WTC11 (cell line): ENCODE measurements at regions of chr10 and their contacts with region 1.

Region 1: DNA sequence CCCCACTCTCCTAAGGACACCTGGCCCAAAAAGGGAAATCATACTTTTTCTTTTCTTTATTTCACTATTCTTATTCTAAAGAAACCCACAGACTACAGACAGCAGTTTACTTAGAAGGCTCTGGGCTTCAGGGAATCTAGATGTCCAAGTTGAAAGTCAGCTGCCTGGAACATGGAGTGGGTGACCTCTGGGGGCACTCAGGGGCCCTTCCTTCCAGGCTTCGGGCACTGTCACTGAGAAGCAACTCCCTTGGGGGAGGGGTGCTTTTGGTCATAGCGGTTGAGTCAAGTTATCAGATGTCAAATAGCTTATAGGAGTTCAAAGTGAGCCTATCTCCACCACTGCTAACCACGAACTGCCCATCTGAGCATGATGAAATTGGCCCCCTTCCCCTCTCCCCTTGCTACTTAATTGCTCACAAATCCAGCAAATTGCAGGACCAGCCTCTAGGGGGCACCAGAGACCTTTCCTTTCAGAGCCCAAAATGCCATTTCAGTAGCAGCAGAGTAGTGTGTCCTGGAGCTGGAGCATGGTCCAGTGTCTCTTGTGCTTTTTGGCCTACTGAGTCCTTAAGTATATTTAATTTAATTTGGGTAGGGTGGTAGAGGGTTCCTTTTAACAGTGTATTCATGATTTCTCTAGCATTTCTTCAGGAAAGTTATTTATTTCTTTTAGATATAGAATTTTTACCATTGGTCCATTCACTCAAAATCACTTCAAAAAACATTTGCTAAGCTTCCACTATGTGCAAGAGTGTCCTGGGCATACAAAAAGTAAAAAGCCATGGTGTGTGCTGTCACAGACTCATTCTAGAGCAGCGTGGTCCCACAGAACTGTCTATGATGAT is 463.8 kb downstream of the KCNMA1 start:
- DNase-seq: peak; percentile 86
- ATAC-seq: peak; percentile 95
- H3K4me3 Mint-ChIP-seq: no peak overlapping the region
- H3K27ac Mint-ChIP-seq: no peak overlapping the region
- H3K4me1 Mint-ChIP-seq: no peaks in the 10 kb centered on the region
- H3K27me3 Mint-ChIP-seq: no peaks in the 10 kb centered on the region; the same call in 1 of the 2 replicates
- CTCF ChIP-seq: peak; percentile 86

Region 2: GRCh38 chr10:77011874-77012811 is 161.7 kb before region 1 on chr10:
- CTCF ChIA-PET with region 1: no interaction called
- POLR2A ChIA-PET with region 1: no interaction called
- DNase-seq: no peak
- ATAC-seq: no peak
- H3K4me3 Mint-ChIP-seq: no peak overlapping the region
- H3K27ac Mint-ChIP-seq: no peak overlapping the region
- H3K4me1 Mint-ChIP-seq: no peaks in the 10 kb centered on the region
- H3K27me3 Mint-ChIP-seq: no peaks in the 10 kb centered on the region
- CTCF ChIP-seq: no peak

Region 3: DNA sequence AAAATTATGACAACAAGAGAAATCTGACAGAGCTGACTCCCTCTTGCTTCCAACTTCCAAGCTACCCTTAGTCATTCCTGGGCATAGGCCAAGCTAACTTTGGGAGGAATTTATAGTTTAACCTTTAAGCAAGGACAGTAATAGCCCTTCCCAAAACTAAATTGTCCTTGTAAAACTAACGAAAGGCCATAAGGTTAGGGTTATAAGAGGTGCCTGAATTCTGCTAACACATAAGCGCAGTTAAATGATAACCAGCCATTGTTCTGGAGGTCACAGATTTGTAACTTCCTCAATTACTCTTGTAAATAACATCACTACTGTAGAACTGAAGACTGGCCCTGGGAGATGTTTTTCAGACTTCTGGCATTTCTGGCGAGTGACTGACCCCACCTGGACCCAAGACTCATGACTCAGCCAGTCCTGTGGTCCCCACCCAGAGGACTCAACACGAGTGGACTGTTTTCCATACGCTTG is 17.4 kb before region 1 on chr10:
- CTCF ChIA-PET with region 1: interaction called, 11 read pairs
- POLR2A ChIA-PET with region 1: no interaction called
- DNase-seq: no peak
- ATAC-seq: no peak
- H3K4me3 Mint-ChIP-seq: no peak overlapping the region
- H3K27ac Mint-ChIP-seq: no peak overlapping the region
- H3K4me1 Mint-ChIP-seq: peaks cover 20% of the 10 kb centered on the region
- H3K27me3 Mint-ChIP-seq: no peaks in the 10 kb centered on the region
- CTCF ChIP-seq: no peak

Region 4: DNA sequence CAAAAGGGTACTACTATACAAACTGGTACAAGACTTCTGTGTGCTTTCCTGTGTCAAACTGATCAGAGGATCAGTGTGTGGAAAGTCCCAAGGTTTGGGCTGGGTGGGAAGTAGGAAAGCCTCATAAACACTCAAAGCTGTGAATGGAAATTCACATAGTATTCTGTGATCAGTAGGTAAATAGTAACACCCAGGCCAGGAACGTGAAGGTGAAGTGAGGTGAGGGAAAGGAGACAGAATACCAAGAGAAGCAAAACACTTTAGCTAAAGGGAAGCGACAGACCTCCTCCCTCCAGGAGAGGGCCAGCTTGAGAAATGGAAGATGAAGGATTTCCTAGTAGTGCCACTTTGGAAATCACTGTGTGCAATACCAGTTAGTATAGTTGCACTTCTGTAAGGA is 11.9 kb after region 1 on chr10:
- CTCF ChIA-PET with region 1: interaction called, 16 read pairs
- POLR2A ChIA-PET with region 1: no interaction called
- DNase-seq: no peak
- ATAC-seq: peak; percentile 51; the same call in 1 of the 2 replicates
- H3K4me3 Mint-ChIP-seq: no peak overlapping the region
- H3K27ac Mint-ChIP-seq: no peak overlapping the region
- H3K4me1 Mint-ChIP-seq: peaks cover 18% of the 10 kb centered on the region
- H3K27me3 Mint-ChIP-seq: no peaks in the 10 kb centered on the region
- CTCF ChIP-seq: no peak

Region 5: DNA sequence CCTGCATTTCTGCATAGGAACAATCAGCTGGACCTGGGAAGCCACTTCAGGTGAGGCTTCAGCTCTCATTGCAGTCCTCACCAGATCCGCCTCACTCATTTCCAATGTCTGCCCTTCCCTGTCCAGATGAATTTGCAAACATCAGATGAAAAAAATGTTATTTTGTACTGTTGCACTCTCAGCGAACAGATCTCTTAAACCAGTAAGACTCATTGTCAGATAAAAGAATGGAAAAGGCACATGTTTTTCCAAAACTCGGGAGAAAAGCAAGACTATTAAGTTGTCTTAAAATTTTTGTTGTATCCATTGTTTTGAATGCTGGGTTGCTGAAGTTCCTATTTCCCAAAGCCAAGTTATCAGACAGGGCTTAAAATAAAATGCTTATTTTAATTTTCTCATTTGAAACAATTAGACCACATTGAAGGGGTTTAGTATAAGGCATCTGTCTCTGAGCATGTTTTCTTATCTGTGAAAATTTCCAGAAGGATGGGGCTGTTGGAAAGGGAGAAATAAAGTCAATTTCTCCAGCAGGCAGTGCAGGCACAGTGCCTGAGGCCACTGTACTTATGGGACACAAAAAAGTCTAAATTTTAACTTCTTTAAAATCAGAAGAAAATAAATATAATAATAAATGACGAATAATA is 67.0 kb after region 1 on chr10:
- CTCF ChIA-PET with region 1: interaction called, 13 read pairs
- POLR2A ChIA-PET with region 1: no interaction called
- DNase-seq: no peak
- ATAC-seq: no peak
- H3K4me3 Mint-ChIP-seq: no peak overlapping the region
- H3K27ac Mint-ChIP-seq: no peak overlapping the region
- H3K4me1 Mint-ChIP-seq: no peaks in the 10 kb centered on the region; the same call in 1 of the 2 replicates
- H3K27me3 Mint-ChIP-seq: no peaks in the 10 kb centered on the region
- CTCF ChIP-seq: no peak

Region 6: GRCh38 chr10:77251297-77252013 is 77.6 kb after region 1 on chr10:
- CTCF ChIA-PET with region 1: interaction called, 13 read pairs
- POLR2A ChIA-PET with region 1: no interaction called
- DNase-seq: peak; percentile 50
- ATAC-seq: peak; percentile 90
- H3K4me3 Mint-ChIP-seq: no peak overlapping the region
- H3K27ac Mint-ChIP-seq: no peak overlapping the region
- H3K4me1 Mint-ChIP-seq: peaks cover 8% of the 10 kb centered on the region
- H3K27me3 Mint-ChIP-seq: no peaks in the 10 kb centered on the region
- CTCF ChIP-seq: peak; percentile 43

Region 7: GRCh38 chr10:77377678-77378352 is 204.0 kb after region 1 on chr10:
- CTCF ChIA-PET with region 1: interaction called, 11 read pairs
- POLR2A ChIA-PET with region 1: no interaction called
- DNase-seq: peak; percentile 25
- ATAC-seq: peak; percentile 81
- H3K4me3 Mint-ChIP-seq: no peak overlapping the region
- H3K27ac Mint-ChIP-seq: no peak overlapping the region
- H3K4me1 Mint-ChIP-seq: peaks cover 5% of the 10 kb centered on the region; the same call in 1 of the 2 replicates
- H3K27me3 Mint-ChIP-seq: no peaks in the 10 kb centered on the region
- CTCF ChIP-seq: no peak

Region 8: DNA sequence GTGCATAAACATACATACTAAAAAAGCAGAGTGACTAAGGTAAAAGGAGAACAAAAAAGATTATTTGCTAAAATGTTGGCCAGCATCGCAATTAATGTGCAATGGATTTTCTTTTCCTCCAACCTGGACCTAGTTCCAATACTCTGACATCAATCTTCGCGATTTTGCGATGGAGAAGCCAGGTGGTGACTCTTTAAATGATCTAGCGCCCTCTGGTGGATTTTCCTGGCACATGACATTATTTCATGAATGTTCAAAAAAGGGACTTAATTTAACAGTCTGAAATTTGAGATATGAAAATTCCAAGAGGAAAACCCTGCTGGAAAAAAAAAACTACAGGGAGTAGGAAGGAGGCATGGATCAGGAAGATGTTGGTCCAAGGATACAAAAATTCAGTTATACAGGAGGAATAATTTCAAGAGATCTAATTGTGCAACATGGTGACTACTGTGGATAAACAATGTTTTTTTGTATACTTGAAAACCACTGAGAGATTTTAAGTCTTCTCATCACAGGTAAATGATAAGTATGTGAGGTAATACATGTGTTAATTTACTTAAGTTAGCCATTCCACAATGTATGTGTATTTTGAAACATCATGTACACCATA is 468.1 kb after region 1 on chr10:
- CTCF ChIA-PET with region 1: interaction called, 28 read pairs
- POLR2A ChIA-PET with region 1: no interaction called
- DNase-seq: peak; percentile 56
- ATAC-seq: no peak
- H3K4me3 Mint-ChIP-seq: no peak overlapping the region
- H3K27ac Mint-ChIP-seq: no peak overlapping the region
- H3K4me1 Mint-ChIP-seq: peaks cover 8% of the 10 kb centered on the region
- H3K27me3 Mint-ChIP-seq: peaks cover 45% of the 10 kb centered on the region
- CTCF ChIP-seq: peak; percentile 74